Right ventricle myocardium superior (tissue), 1 donor: ENCODE measurements at regions of chr3 and their contacts with region 1.

Region 1: GRCh38 chr3:98329392-98330124 is 24.1 kb upstream of the OR5K4 start:
- DNase-seq: peak; percentile 43
- ATAC-seq: peak; percentile 63

Region 2: GRCh38 chr3:98048586-98048985 is 281.0 kb before region 1 on chr3:
- intact Hi-C with region 1: loop called (anchors 5 kb)
- DNase-seq: no peak
- ATAC-seq: no peak